ENCODE measurements at regions of chr1 and their contacts with region 1.

Region 1: GRCh38 chr1:206935491-206936067 is 10.7 kb downstream of the PIGR start:
- DNase-seq: peak in 4 of 9 donors; percentile 28 to 56 (median 48)
- ATAC-seq: peak; percentile 68
- H3K4me3 ChIP-seq: no peak overlapping the region
- H3K4me3 Mint-ChIP-seq: no peak overlapping the region
- H3K27ac ChIP-seq: no peak overlapping the region
- H3K27ac Mint-ChIP-seq: peak overlapping the region in 1 of 9 donors; percentile 12
- H3K4me1 ChIP-seq: peaks cover 6 to 12% of the 10 kb centered on the region in 2 donors
- H3K4me1 Mint-ChIP-seq: peaks cover 2 to 31% (median 29%) of the 10 kb centered on the region in 7 donors
- H3K27me3 ChIP-seq: no peaks in the 10 kb centered on the region
- H3K27me3 Mint-ChIP-seq: peaks cover 0 to 8% (median 0%) of the 10 kb centered on the region in 5 donors

Region 2: DNA sequence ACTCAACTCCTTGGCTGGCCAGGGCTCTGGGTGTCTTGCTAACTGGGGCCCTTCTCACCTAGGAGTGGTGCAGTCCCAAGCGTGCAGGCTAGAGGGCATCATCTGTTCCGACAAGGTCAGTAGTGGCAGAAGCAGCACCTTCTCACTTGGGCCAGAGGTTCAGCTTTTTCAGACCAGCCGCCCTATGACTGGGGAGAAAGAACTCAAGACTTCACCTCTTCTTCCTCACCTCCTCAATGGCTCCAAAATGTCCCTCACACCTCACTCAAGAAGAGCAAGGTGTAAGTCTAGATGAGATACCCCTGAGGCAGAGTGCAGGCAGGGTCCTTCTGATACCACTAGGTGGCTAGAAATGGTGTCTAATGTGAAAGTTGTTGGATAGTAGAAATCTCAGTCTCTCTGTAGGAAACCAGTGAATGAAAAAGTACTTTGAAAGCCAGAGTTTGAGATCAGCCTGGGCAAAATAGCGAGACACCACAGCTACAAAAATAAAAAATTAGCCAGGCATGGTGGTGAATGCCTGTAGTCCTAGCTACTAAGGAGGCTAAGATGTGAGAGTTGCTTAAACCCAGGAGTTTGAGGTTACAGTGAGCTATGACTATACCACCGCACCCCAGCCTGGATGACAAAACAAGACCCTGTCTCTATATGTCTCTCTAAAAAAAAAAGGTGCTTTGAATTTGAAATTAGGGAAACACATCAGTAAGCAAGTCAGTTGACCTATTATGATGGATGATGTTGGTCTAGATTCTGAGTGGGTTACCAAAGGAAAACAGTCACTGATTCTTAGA is 78.7 kb before region 1 on chr1:
- CTCF ChIA-PET with region 1: interaction called, 6 read pairs
- POLR2A ChIA-PET with region 1: interaction called, 4 read pairs
- intact Hi-C with region 1: loop called in 1 of 2 experiments (anchors 2 kb)
- DNase-seq: peak in 5 of 9 donors; percentile 19 to 32 (median 28)
- ATAC-seq: peak; percentile 54
- H3K4me3 ChIP-seq: no peak overlapping the region
- H3K4me3 Mint-ChIP-seq: no peak overlapping the region
- H3K27ac ChIP-seq: no peak overlapping the region
- H3K27ac Mint-ChIP-seq: peak overlapping the region in 1 of 9 donors; percentile 55
- H3K4me1 ChIP-seq: peaks cover 0 to 15% of the 10 kb centered on the region in 2 donors
- H3K4me1 Mint-ChIP-seq: peaks cover 7 to 31% (median 24%) of the 10 kb centered on the region in 7 donors
- H3K27me3 ChIP-seq: no peaks in the 10 kb centered on the region
- H3K27me3 Mint-ChIP-seq: peaks cover 0 to 32% (median 0%) of the 10 kb centered on the region in 5 donors

Region 3: DNA sequence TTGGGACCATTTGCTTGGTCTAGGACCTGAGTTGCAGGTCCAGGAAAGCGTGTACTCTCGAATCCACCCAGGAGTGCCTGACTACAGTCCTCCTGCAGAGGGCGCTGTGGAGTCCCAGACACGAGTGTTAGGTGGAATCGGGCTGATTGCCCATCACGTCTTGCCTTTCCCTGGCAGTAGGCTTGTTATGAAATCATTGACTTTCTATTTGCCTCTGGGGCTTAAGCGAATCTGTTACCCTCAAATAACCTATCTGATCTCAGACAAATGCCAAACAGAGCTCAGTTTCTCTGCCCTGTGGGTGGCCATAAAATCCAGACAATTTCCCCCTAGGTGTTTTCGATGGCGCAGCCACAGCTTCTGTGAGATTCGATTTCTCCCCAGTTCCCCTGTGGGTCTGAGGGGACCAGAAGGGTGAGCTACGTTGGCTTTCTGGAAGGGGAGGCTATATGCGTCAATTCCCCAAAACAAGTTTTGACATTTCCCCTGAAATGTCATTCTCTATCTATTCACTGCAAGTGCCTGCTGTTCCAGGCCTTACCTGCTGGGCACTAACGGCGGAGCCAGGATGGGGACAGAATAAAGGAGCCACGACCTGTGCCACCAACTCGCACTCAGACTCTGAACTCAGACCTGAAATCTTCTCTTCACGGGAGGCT is 70.4 kb before region 1 on chr1 and contains the start of gene IL20:
- CTCF ChIA-PET with region 1: interaction called, 11 read pairs
- POLR2A ChIA-PET with region 1: interaction called, 4 read pairs
- intact Hi-C with region 1: loop called (anchors 1 kb)
- DNase-seq: peak; percentile 71 to 92 (median 84)
- ATAC-seq: peak; percentile 97
- H3K4me3 ChIP-seq: no peak within 1 kb of the TSS
- H3K4me3 Mint-ChIP-seq: peak within 1 kb of the TSS in 2 of 10 donors; percentile 3 to 5
- H3K27ac ChIP-seq: no peak within 1 kb of the TSS
- H3K27ac Mint-ChIP-seq: peak within 1 kb of the TSS in 6 of 9 donors; percentile 7 to 53 (median 28)
- H3K4me1 ChIP-seq: no peaks in the 10 kb centered on the region
- H3K4me1 Mint-ChIP-seq: peaks cover 3 to 16% (median 7%) of the 10 kb centered on the region in 7 donors
- H3K27me3 ChIP-seq: no peaks in the 10 kb centered on the region
- H3K27me3 Mint-ChIP-seq: peaks cover 0 to 56% (median 0%) of the 10 kb centered on the region in 5 donors
- total RNA-seq, gene IL20: not detected

Region 4: DNA sequence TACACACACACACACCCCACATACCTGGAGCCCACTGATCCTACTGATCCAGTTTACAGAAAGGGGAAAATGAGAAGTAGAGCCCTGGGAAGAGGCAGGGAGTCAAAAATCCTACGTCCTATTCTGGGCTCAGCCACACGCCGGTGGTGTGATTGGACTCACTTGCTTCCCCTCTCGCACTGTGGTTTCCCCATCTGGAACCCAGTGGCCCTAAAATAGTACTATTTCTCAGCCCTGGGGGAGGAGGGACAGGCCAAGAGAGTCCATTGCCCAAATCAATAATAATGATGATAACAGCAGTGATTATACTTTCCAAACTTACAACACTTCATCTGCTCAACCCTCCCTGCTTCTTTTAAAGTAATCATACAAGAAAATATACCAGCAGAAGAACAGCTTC is 13.6 kb after region 1 on chr1:
- CTCF ChIA-PET with region 1: interaction called, 15 read pairs
- POLR2A ChIA-PET with region 1: interaction called, 3 read pairs
- intact Hi-C with region 1: no loop called
- DNase-seq: no peak
- ATAC-seq: no peak
- H3K4me3 ChIP-seq: no peak overlapping the region
- H3K4me3 Mint-ChIP-seq: no peak overlapping the region
- H3K27ac ChIP-seq: no peak overlapping the region
- H3K27ac Mint-ChIP-seq: no peak overlapping the region
- H3K4me1 ChIP-seq: peaks cover 0 to 4% of the 10 kb centered on the region in 2 donors
- H3K4me1 Mint-ChIP-seq: peaks cover 0 to 7% (median 0%) of the 10 kb centered on the region in 7 donors
- H3K27me3 ChIP-seq: no peaks in the 10 kb centered on the region
- H3K27me3 Mint-ChIP-seq: peaks cover 0 to 35% (median 8%) of the 10 kb centered on the region in 5 donors